ENCODE measurements at regions of chr1 and their contacts with region 1.

Region 1: DNA sequence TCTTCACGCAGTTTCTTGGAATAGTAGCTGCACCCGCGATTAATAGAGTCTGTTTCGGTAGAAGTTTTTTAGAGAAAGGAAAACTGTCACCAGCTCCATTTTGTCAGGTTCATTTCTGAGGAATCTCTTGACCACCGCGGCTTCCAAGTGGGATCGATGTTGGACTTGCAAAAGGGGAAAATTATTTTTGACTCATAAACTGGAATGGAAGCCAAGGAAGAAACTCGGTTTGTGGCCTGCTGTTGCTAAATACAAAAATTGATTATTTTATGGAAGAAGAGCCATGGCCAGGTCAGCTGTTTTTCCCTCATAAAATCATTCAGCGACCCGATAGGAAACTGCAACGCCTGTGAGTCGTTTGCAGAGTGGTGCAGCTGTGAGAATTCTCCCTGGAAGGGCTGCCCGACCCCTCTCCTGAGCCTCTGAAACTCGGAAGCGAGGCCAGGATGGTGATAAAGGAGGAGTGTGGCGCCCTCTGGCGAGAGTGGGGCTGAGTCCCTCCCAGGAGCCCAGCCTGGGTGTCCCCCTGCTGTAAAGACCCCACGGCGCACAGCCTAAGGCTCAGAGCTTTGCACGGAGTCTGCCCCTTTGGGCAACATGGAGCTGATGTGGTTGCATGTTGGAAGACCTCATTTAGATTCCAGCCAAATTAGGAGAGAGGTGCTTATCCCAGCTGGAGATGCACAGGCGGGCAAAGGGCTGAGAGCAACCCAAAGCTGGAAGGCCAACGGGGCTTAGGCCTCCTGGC is 83.6 kb upstream of the SLC25A33 start:
- DNase-seq: peak; percentile 81
- ATAC-seq: peak; percentile 80
- H3K4me3 Mint-ChIP-seq: no peak overlapping the region
- H3K27ac Mint-ChIP-seq: no peak overlapping the region
- H3K4me1 Mint-ChIP-seq: no peaks in the 10 kb centered on the region
- H3K27me3 Mint-ChIP-seq: no peaks in the 10 kb centered on the region
- CTCF ChIP-seq: peak; percentile 90

Region 2: DNA sequence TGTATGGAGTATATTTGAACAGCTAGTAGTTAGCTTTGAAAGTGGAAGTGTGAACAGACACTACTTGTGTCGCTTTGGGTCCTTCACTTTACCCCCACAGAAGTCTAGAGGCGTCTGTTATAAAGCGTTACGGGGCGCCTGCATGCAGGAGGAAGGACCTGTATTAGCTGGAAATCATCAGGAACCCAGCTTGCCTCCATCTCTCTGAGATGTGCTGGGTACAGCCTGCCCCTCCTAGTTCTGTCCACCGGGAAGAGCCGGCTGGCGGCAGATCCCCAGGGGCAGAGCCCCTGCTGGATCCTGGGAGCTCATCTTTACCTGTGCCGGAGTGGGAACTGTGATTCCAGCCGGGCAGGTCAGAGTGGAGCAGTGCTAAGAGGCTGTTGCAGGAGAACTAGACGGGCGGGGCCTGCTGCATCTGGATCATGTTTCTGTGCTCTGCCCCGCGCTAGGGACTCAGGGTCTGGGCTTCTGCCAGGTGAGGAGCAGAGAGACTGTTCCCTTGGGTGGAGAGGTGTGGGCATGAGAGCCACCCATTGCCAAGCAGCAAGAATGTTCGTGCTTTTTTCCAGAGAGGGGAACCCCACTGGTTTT is 185.3 kb before region 1 on chr1:
- CTCF ChIA-PET with region 1: interaction called, 36 read pairs
- POLR2A ChIA-PET with region 1: no interaction called
- intact Hi-C with region 1: loop called (anchors 5 kb)
- DNase-seq: no peak
- ATAC-seq: no peak
- H3K4me3 Mint-ChIP-seq: no peak overlapping the region
- H3K27ac Mint-ChIP-seq: no peak overlapping the region
- H3K4me1 Mint-ChIP-seq: peaks cover 5% of the 10 kb centered on the region
- H3K27me3 Mint-ChIP-seq: no peaks in the 10 kb centered on the region
- CTCF ChIP-seq: no peak

Region 3: DNA sequence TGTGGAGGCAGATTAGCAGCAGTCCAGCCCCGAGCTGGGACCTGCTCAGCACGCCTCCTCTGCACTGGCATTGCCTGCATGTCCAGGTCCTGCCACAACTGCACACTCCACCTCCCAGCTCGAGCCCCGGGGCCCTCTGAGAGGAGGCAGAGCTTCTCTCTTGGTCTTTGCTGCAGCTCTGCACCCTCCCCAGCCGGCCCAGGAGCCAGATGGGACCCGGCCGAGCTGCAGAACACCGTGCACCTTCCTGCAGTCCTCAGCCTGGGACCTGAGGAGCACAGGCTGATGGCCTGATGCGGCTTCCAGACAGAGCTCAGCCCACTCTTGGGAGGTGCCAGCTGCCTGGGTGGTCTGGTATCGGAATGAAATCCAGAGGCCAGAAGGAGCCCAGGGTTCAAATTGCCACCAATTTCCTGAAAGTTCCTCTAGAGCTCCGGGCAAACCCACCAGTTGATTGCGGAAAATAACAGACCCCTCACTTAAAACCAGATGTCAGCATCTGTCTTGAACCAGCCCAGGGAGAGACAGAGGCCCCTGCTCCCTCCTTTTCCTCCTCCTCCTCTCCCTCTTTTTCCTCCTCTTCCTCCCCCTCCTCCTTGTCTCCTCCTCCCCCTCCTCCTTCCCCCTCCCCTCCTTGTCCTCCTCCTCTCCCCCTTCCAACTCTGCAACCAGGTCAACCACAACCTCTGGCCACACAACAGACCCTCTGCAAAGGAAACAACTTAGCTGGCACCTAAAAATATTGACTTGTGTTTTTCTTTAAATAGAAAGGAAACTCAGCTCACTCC is 173.6 kb before region 1 on chr1:
- CTCF ChIA-PET with region 1: interaction called, 129 read pairs
- POLR2A ChIA-PET with region 1: no interaction called
- intact Hi-C with region 1: no loop called
- DNase-seq: no peak
- ATAC-seq: no peak
- H3K4me3 Mint-ChIP-seq: no peak overlapping the region
- H3K27ac Mint-ChIP-seq: no peak overlapping the region
- H3K4me1 Mint-ChIP-seq: peaks cover 50% of the 10 kb centered on the region
- H3K27me3 Mint-ChIP-seq: no peaks in the 10 kb centered on the region
- CTCF ChIP-seq: no peak

Region 4: GRCh38 chr1:9441451-9442133 is 14.1 kb before region 1 on chr1:
- CTCF ChIA-PET with region 1: interaction called, 15 read pairs
- POLR2A ChIA-PET with region 1: no interaction called
- intact Hi-C with region 1: no loop called
- DNase-seq: no peak
- ATAC-seq: no peak
- H3K4me3 Mint-ChIP-seq: no peak overlapping the region
- H3K27ac Mint-ChIP-seq: no peak overlapping the region
- H3K4me1 Mint-ChIP-seq: no peaks in the 10 kb centered on the region
- H3K27me3 Mint-ChIP-seq: peaks cover 5% of the 10 kb centered on the region
- CTCF ChIP-seq: no peak

Measured in activated CD8-positive, alpha-beta T cell treated with anti-CD3 and anti-CD28 coated beads for 36 hours (primary cell).